Colonic mucosa (tissue), 4 donors: ENCODE measurements at regions of chr21 and their contacts with region 1.

Region 1: GRCh38 chr21:29351691-29352090 is 53.0 kb downstream of the BACH1 start:
- DNase-seq: no peak
- H3K4me3 ChIP-seq: no peak overlapping the region
- H3K27ac ChIP-seq: no peak overlapping the region
- H3K4me1 ChIP-seq: no peaks in the 10 kb centered on the region
- H3K27me3 ChIP-seq: no peaks in the 10 kb centered on the region
- CTCF ChIP-seq: no peak

Region 2: DNA sequence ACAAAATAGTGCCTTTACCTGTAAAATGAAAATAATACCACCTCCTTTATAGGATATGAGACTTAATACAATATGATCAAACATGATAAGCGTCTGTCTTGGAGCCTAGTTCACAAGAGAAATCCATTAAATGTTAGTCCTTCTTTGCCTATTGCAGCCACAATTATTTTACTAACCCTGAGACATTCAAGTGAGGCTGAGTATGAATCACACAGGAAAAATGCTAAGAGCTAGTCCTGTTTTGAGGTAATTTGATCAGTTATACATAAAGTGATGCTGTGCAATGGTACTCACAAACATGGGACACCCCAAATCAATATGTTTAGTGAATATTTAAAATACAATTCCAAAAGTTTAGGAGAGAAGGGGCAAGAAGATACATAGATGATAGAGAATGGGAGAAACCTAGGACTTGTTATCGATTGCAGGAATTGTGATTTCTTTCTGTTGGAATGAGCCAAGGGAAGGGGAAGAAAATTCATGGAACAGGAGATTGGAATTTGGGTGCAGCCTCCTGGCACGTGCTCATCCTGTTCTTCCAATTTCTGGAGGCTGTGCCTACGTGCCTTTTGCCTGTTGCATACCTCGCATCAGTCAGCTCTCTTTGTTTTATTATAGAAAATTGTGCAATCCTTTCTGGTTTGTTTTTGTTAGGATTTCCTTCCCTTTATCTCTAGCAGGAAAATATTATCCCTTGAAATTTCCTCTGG is 92.9 kb before region 1 on chr21:
- intact Hi-C with region 1: loop called (anchors 10 kb)
- DNase-seq: no peak
- H3K4me3 ChIP-seq: no peak overlapping the region
- H3K27ac ChIP-seq: no peak overlapping the region
- H3K4me1 ChIP-seq: no peaks in the 10 kb centered on the region
- H3K27me3 ChIP-seq: no peaks in the 10 kb centered on the region
- CTCF ChIP-seq: no peak

Region 3: DNA sequence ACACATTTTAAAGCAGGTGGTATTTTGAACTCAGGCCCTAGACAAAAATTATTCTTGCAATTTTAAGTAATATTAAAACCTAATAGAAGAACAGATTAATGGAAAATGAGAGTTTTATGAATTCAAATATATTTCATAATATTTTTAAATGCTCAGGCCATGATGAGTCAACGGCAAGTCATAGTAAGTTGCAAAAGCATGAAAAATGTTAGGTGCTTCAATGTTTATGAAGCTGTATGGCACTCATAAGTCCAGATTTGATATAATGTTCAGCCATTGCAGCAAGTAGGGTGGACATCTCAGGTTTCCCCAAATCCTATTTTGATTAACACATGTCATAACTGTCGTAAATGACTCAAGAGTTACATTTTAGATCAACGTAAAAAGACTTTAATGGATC is 475.5 kb after region 1 on chr21:
- intact Hi-C with region 1: no loop called
- DNase-seq: no peak
- H3K4me3 ChIP-seq: no peak overlapping the region
- H3K27ac ChIP-seq: no peak overlapping the region
- H3K4me1 ChIP-seq: no peaks in the 10 kb centered on the region
- H3K27me3 ChIP-seq: no peaks in the 10 kb centered on the region
- CTCF ChIP-seq: no peak